ENCODE measurements at regions of chr2 and their contacts with region 1.

Region 1: DNA sequence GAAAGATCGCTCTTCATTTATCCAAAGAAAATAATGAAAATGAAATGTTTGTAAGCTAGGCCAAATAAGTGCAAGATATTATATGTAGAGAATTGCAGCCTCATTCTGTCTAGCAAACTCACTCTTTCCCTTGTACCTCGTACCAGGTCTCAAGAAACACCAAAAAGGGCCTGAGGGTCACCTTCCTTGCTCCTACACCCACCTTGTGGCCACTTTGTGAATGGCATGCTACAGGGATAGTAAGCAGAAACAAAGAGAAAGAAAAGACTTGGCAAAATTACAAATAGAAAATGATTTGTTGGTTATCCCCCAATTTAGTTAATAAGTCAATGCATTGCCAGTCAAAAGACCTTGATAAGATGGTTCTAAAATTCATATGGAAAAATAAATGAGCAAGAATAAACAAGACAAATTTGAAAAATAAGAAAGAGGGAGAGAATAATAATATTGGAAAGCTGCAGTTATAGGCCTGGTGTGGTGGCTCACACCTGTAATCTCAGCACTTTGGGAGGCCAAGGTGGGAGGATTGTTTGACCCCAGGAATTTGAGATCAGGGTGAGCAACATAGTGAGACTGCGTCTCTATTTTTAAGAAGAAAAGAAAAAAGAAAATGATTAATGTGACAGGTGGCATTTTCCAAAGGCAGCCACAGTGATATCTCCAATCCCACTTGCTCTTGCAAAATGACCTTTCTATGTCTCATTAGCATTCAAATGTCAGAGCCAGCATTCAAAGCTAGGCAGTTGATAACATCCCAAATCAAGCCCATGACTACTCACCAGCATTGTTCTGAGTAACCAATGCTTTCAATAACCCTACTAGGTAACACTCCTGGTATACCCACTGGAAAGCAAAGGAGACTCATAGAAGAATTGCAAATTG is 38.8 kb upstream of the BMP10 start:
- DNase-seq: peak; percentile 36 to 82 (median 70)
- ATAC-seq: peak; percentile 21
- H3K4me3 ChIP-seq: no peak overlapping the region
- H3K4me3 Mint-ChIP-seq: no peak overlapping the region
- H3K27ac ChIP-seq: no peak overlapping the region
- H3K27ac Mint-ChIP-seq: peak overlapping the region; percentile 42
- H3K4me1 ChIP-seq: peaks cover 34% of the 10 kb centered on the region
- H3K4me1 Mint-ChIP-seq: peaks cover 34% of the 10 kb centered on the region
- H3K27me3 ChIP-seq: no peaks in the 10 kb centered on the region
- H3K27me3 Mint-ChIP-seq: no peaks in the 10 kb centered on the region
- CTCF ChIP-seq: peak; percentile 98

Region 2: GRCh38 chr2:68487773-68488355 is 422.2 kb before region 1 on chr2:
- CTCF ChIA-PET with region 1: interaction called, 4 read pairs
- POLR2A ChIA-PET with region 1: no interaction called
- intact Hi-C with region 1: loop called in 1 of 2 experiments (anchors 5 kb)
- DNase-seq: peak in 2 of 9 experiments; percentile 36 to 54
- ATAC-seq: peak; percentile 71
- H3K4me3 ChIP-seq: no peak overlapping the region
- H3K4me3 Mint-ChIP-seq: no peak overlapping the region
- H3K27ac ChIP-seq: no peak overlapping the region
- H3K27ac Mint-ChIP-seq: no peak overlapping the region
- H3K4me1 ChIP-seq: no peaks in the 10 kb centered on the region
- H3K4me1 Mint-ChIP-seq: peaks cover 3% of the 10 kb centered on the region
- H3K27me3 ChIP-seq: no peaks in the 10 kb centered on the region
- H3K27me3 Mint-ChIP-seq: no peaks in the 10 kb centered on the region
- CTCF ChIP-seq: peak; percentile 65

Region 3: DNA sequence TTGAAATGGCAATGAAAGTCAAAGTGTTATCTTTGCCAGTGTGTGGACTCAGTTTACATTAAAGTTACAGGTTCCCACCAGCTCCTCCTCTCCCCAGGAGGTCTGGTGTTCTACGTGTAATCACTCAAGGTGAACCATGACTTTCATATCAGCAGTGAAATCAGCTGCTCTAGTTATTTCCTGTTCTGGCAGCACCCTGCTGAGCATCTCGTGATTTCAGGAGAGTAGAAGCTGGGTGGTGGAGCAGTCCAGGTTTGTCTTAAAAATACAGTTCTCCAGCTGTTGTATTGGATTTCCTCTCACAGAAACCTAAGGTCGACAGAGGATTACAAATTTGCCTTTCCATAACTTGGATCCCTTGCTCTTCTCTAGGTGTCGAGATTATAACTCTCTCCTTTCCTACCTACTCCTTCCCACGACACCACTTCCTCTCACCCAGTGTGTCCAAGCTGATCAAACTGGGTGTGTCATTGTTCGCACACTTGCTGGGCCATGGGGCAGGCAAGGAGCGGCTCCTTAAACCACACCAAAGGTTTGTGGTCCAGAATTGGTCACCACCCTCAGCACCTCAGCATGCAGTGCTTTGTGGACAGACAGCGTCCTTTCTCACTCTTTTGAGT is 188.4 kb before region 1 on chr2:
- CTCF ChIA-PET with region 1: interaction called, 29 read pairs
- POLR2A ChIA-PET with region 1: interaction called, 7 read pairs
- intact Hi-C with region 1: loop called in 1 of 2 experiments (anchors 5 kb)
- DNase-seq: peak in 7 of 9 experiments; percentile 16 to 76 (median 46)
- ATAC-seq: peak; percentile 73
- H3K4me3 ChIP-seq: peak overlapping the region in 1 of 2 experiments; percentile 4
- H3K4me3 Mint-ChIP-seq: peak overlapping the region; percentile 72
- H3K27ac ChIP-seq: peak overlapping the region in 1 of 2 experiments; percentile 63
- H3K27ac Mint-ChIP-seq: peak overlapping the region; percentile 87
- H3K4me1 ChIP-seq: peaks cover 71% of the 10 kb centered on the region
- H3K4me1 Mint-ChIP-seq: peaks cover 82% of the 10 kb centered on the region
- H3K27me3 ChIP-seq: no peaks in the 10 kb centered on the region
- H3K27me3 Mint-ChIP-seq: no peaks in the 10 kb centered on the region
- CTCF ChIP-seq: no peak

Region 4: DNA sequence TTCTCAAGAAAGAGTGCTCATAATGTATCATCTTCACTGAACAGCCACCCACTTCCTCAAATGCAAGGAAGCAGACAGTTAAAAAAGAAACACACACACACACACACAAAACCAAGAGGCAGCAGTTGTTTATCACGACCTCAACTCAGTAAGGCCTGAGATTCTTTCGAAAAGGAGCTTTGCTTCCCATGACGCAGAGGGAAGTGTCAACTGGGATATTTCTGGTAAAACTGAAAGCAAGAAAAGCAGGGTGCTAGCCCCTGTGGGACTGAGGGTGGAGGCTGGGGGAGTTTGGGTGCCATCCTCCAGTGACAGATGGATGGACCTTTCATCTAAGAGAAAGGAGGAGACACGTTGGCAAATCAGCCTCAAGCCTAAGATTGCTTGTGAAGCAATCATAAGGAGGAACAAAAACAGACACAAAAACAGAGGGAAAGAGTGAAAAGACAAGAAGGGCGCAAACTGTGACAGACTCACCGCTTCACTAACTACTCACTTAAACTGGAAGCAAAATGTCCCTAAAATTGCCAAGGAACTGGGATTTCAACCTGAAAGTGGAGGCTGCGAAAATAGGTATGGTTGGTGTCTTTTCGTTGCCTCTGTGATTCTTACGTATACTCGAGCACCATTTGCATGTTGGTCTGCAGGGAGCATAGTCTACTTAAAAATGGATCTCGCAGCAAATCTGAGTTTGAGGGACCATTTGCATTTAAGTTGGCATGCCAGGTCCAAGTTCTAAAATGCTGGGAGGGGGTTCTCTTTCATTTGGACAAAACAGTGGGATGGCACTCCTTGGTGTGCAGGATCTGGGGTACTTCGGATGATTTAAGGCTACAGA is 175.1 kb before region 1 on chr2 and contains the start of gene ARHGAP25:
- CTCF ChIA-PET with region 1: interaction called, 12 read pairs
- POLR2A ChIA-PET with region 1: interaction called, 7 read pairs
- intact Hi-C with region 1: no loop called
- DNase-seq: peak in 7 of 9 experiments; percentile 25 to 83 (median 61)
- ATAC-seq: peak; percentile 65
- H3K4me3 ChIP-seq: peak within 1 kb of the TSS; percentile 61 to 84
- H3K4me3 Mint-ChIP-seq: no peak within 1 kb of the TSS
- H3K27ac ChIP-seq: peak within 1 kb of the TSS; percentile 62 to 81
- H3K27ac Mint-ChIP-seq: no peak within 1 kb of the TSS
- H3K4me1 ChIP-seq: peaks cover 41% of the 10 kb centered on the region
- H3K4me1 Mint-ChIP-seq: peaks cover 38% of the 10 kb centered on the region
- H3K27me3 ChIP-seq: no peaks in the 10 kb centered on the region
- H3K27me3 Mint-ChIP-seq: no peaks in the 10 kb centered on the region
- CTCF ChIP-seq: no peak
- total RNA-seq, gene ARHGAP25: 35.8 to 36.7 TPM

Region 5: GRCh38 chr2:68766376-68766845 is 143.6 kb before region 1 on chr2:
- CTCF ChIA-PET with region 1: interaction called, 18 read pairs
- POLR2A ChIA-PET with region 1: interaction called, 7 read pairs
- intact Hi-C with region 1: loop called in 1 of 2 experiments (anchors 5 kb)
- DNase-seq: peak; percentile 37 to 91 (median 75)
- ATAC-seq: peak; percentile 62
- H3K4me3 ChIP-seq: peak overlapping the region; percentile 25 to 34
- H3K4me3 Mint-ChIP-seq: peak overlapping the region; percentile 81
- H3K27ac ChIP-seq: peak overlapping the region; percentile 73 to 88
- H3K27ac Mint-ChIP-seq: peak overlapping the region; percentile 100
- H3K4me1 ChIP-seq: peaks cover 98% of the 10 kb centered on the region
- H3K4me1 Mint-ChIP-seq: peaks cover 95% of the 10 kb centered on the region
- H3K27me3 ChIP-seq: no peaks in the 10 kb centered on the region
- H3K27me3 Mint-ChIP-seq: no peaks in the 10 kb centered on the region
- CTCF ChIP-seq: no peak

Region 6: DNA sequence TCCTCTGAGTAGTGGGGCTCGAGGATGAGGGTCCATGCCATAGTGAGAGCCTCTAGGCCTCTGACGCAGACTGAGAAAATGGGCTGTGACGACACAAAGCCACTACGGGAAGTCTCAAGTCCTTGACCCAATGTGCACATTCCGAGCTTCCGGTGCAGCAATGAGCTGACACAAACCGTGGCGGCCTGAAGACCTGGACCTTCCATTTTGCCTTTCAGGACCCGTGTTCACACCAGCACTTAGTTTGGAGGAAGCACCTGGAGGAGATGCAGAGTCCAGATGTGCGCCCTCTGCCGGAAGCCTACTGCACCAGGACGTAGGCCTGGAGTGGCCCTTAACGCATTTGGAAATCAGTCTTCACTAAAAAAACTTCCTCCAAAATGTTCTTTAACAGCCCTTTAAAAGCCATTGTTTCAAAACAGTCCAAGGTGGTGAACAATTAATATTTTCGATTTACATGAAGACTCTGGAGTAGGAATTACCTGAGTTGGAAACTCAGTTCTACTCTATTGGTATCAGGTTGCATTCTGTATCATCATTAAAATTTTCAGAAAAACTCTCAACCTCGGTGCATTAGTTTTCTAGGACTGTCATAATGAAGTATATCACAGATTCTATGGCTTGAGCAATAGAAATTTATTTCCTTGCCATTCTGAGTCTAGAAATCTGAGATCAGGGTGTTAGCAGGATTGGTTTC is 72.7 kb before region 1 on chr2:
- CTCF ChIA-PET with region 1: interaction called, 9 read pairs
- POLR2A ChIA-PET with region 1: interaction called, 5 read pairs
- intact Hi-C with region 1: loop called (anchors 1 to 5 kb)
- DNase-seq: peak; percentile 39 to 83 (median 73)
- ATAC-seq: peak; percentile 74
- H3K4me3 ChIP-seq: no peak overlapping the region
- H3K4me3 Mint-ChIP-seq: no peak overlapping the region
- H3K27ac ChIP-seq: no peak overlapping the region
- H3K27ac Mint-ChIP-seq: no peak overlapping the region
- H3K4me1 ChIP-seq: peaks cover 8% of the 10 kb centered on the region
- H3K4me1 Mint-ChIP-seq: peaks cover 23% of the 10 kb centered on the region
- H3K27me3 ChIP-seq: no peaks in the 10 kb centered on the region
- H3K27me3 Mint-ChIP-seq: no peaks in the 10 kb centered on the region
- CTCF ChIP-seq: peak; percentile 82